AG04449 (cell line): ENCODE measurements at regions of chr1 and their contacts with region 1.

Region 1: GRCh38 chr1:37574834-37575480 is 18.2 kb downstream of the DNALI1 start:
- DNase-seq: peak; percentile 65
- H3K4me3 ChIP-seq: no peak overlapping the region
- CTCF ChIP-seq: no peak

Region 2: DNA sequence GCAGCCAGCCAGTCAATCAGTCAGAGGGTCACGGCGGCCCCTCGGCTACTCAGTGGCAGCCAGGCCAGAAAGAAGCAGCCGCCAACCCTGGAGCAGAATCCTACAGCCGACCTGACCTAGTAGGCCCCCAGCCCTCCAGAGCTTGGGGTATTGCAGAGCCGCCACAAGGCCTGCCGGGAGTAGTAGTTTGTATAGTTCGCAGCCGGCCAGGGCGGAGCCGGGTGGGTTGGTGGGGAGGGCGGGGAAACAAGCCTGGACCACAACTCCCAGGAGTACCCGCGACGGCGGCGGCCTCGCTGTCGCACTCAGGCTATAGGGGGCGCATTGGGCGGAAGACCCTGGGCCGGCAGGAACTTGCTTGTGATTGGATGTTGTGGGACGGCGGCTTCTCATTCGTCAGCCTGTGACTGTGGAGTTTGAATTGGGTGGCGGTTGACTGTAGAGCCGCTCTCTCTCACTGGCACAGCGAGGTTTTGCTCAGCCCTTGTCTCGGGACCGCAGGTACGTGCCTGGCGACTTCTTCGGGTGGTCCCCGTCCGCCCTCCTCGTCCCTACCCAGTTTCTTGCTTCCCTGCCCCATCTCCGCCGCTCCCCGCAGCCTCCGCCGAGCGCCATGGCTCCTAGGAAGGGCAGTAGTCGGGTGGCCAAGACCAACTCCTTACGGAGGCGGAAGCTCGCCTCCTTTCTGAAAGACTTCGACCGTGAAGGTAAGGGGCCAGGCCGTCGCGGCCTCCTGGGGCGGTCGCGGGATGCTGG is 117.3 kb after region 1 on chr1 and contains the start of gene CDCA8:
- CTCF ChIA-PET with region 1: interaction called, 15 read pairs
- POLR2A ChIA-PET with region 1: no interaction called
- DNase-seq: peak; percentile 84
- H3K4me3 ChIP-seq: peak within 1 kb of the TSS; percentile 98
- CTCF ChIP-seq: peak; percentile 90